WTC11 (cell line): ENCODE measurements at regions of chr1 and their contacts with region 1.

Region 1: GRCh38 chr1:204941421-204942338 is 71.0 kb downstream of the NFASC start:
- DNase-seq: peak; percentile 86
- ATAC-seq: peak; percentile 92
- H3K4me3 Mint-ChIP-seq: no peak overlapping the region
- H3K27ac Mint-ChIP-seq: no peak overlapping the region
- H3K4me1 Mint-ChIP-seq: peaks cover 7% of the 10 kb centered on the region; the same call in 1 of the 2 replicates
- H3K27me3 Mint-ChIP-seq: no peaks in the 10 kb centered on the region
- CTCF ChIP-seq: peak; percentile 93

Region 2: GRCh38 chr1:204697893-204698292 is 243.8 kb before region 1 on chr1:
- CTCF ChIA-PET with region 1: no interaction called
- POLR2A ChIA-PET with region 1: no interaction called
- DNase-seq: no peak
- ATAC-seq: no peak
- H3K4me3 Mint-ChIP-seq: no peak overlapping the region
- H3K27ac Mint-ChIP-seq: no peak overlapping the region
- H3K4me1 Mint-ChIP-seq: peaks cover 17% of the 10 kb centered on the region
- H3K27me3 Mint-ChIP-seq: peaks cover 37% of the 10 kb centered on the region
- CTCF ChIP-seq: no peak

Region 3: GRCh38 chr1:204730826-204731459 is 210.7 kb before region 1 on chr1:
- CTCF ChIA-PET with region 1: no interaction called
- POLR2A ChIA-PET with region 1: no interaction called
- DNase-seq: no peak
- ATAC-seq: peak; percentile 65
- H3K4me3 Mint-ChIP-seq: no peak overlapping the region
- H3K27ac Mint-ChIP-seq: no peak overlapping the region
- H3K4me1 Mint-ChIP-seq: peaks cover 27% of the 10 kb centered on the region
- H3K27me3 Mint-ChIP-seq: peaks cover 51% of the 10 kb centered on the region
- CTCF ChIP-seq: no peak

Region 4: DNA sequence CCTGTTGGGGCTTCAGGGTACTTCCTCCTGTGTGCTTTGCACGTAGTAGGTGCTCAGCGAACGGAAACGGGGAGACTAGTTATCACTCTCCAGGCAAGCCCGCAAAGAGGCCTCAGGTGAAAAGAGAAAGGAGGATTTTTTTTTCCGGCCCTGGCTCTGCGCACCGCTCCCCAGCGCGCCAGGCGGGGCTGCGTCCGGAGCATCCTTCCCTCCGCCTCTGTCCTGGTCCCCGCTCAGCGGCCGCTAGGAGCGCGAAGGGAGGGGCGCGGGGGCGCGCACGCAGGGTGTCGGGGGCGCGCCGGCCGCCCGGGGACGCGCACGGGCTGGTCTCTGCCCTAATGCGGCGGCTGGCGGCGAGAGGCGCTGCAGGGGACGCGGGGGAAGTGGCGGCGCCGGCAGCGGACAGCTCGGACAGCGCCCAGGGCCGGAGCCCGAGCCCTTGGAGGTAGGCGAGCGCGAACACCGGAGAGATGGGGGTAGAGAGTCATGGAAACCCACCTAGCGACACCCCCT is 113.3 kb before region 1 on chr1:
- CTCF ChIA-PET with region 1: interaction called, 40 read pairs
- POLR2A ChIA-PET with region 1: no interaction called
- DNase-seq: peak; percentile 88
- ATAC-seq: peak; percentile 82
- H3K4me3 Mint-ChIP-seq: peak overlapping the region; percentile 73
- H3K27ac Mint-ChIP-seq: no peak overlapping the region
- H3K4me1 Mint-ChIP-seq: peaks cover 34% of the 10 kb centered on the region
- H3K27me3 Mint-ChIP-seq: peaks cover 22% of the 10 kb centered on the region
- CTCF ChIP-seq: no peak

Region 5: GRCh38 chr1:204834336-204834735 is 107.3 kb before region 1 on chr1:
- CTCF ChIA-PET with region 1: interaction called, 40 read pairs
- POLR2A ChIA-PET with region 1: no interaction called
- DNase-seq: peak; percentile 71
- ATAC-seq: peak; percentile 84
- H3K4me3 Mint-ChIP-seq: no peak overlapping the region
- H3K27ac Mint-ChIP-seq: no peak overlapping the region
- H3K4me1 Mint-ChIP-seq: peaks cover 42% of the 10 kb centered on the region
- H3K27me3 Mint-ChIP-seq: peaks cover 13% of the 10 kb centered on the region; the same call in 1 of the 2 replicates
- CTCF ChIP-seq: no peak

Region 6: DNA sequence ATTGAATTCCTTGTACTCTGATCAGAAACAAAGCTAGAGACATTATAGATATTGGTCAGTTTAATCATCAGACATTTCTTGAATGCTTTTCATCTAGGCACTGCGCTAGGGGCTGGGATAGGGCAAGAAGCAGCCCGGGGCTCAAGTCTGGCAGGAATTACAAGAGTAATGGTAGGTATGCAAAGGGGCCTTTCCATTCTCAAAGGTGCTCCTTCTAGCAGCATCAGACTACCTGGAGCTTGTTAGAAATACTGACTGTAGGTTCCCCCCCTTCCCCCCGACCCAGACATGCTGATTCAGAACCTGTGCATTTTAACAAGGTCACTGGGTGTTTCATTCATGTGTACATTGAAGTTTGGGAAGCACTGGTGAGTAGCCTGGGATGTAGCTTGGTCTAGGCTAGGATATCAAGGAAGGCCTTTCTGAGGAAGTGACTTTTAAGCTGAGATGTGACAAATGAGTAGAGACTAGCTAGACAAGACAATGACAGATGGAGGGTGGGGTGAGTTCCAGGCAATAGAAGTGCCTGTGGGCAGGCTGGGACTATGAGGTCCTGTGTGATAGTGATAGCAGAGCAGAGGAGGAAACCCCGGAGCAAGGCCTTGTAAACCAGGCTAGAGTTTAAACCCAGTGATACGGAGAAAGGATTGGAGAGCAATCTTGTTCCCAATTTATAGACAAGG is 44.8 kb before region 1 on chr1:
- CTCF ChIA-PET with region 1: interaction called, 12 read pairs
- POLR2A ChIA-PET with region 1: no interaction called
- DNase-seq: no peak
- ATAC-seq: peak; percentile 53
- H3K4me3 Mint-ChIP-seq: no peak overlapping the region
- H3K27ac Mint-ChIP-seq: peak overlapping the region; percentile 48; the same call in 1 of the 2 replicates
- H3K4me1 Mint-ChIP-seq: peaks cover 8% of the 10 kb centered on the region
- H3K27me3 Mint-ChIP-seq: no peaks in the 10 kb centered on the region; the same call in 1 of the 2 replicates
- CTCF ChIP-seq: no peak

Region 7: GRCh38 chr1:204924013-204924967 is 17.4 kb before region 1 on chr1:
- CTCF ChIA-PET with region 1: interaction called, 45 read pairs
- POLR2A ChIA-PET with region 1: no interaction called
- DNase-seq: peak; percentile 57
- ATAC-seq: peak; percentile 84
- H3K4me3 Mint-ChIP-seq: peak overlapping the region; percentile 25
- H3K27ac Mint-ChIP-seq: peak overlapping the region; percentile 96
- H3K4me1 Mint-ChIP-seq: peaks cover 82% of the 10 kb centered on the region
- H3K27me3 Mint-ChIP-seq: peaks cover 2% of the 10 kb centered on the region; the same call in 1 of the 2 replicates
- CTCF ChIP-seq: no peak

Region 8: GRCh38 chr1:205032508-205032907 is 90.8 kb after region 1 on chr1:
- CTCF ChIA-PET with region 1: no interaction called
- POLR2A ChIA-PET with region 1: no interaction called
- DNase-seq: no peak
- ATAC-seq: no peak
- H3K4me3 Mint-ChIP-seq: no peak overlapping the region
- H3K27ac Mint-ChIP-seq: no peak overlapping the region
- H3K4me1 Mint-ChIP-seq: peaks cover 5% of the 10 kb centered on the region
- H3K27me3 Mint-ChIP-seq: peaks cover 7% of the 10 kb centered on the region
- CTCF ChIP-seq: no peak